Heart right ventricle (tissue), 16 donors: ENCODE measurements at regions of chr3 and their contacts with region 1.

Region 1: DNA sequence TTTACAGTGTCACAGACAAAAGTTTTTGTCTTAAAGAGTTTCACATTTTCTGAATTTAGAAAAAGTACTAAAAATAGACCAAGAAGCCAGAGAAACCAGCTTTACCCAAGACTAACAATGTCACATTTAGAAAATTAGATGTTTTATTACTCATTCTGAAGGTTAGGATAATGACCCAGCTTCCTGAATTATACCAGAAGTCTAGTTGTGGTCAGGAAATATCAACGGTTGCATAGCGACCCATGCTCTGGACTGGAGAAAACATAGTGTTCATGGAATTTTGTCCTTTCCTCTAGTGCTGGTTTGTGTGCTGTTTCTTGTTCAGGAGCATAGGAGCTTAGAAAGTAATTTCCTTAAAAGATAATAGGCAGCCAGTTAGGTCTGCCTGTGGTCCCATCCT is 59.0 kb downstream of the DPPA2 start:
- DNase-seq: no peak
- ATAC-seq: peak in 6 of 8 donors; percentile 49 to 89 (median 64)
- H3K4me3 ChIP-seq: no peak overlapping the region
- H3K27ac ChIP-seq: peak overlapping the region in 2 of 10 donors; percentile 31 to 47
- H3K4me1 ChIP-seq: no peaks in the 10 kb centered on the region
- H3K27me3 ChIP-seq: no peaks in the 10 kb centered on the region
- CTCF ChIP-seq: no peak

Region 2: GRCh38 chr3:107680698-107681097 is 1576.6 kb before region 1 on chr3:
- intact Hi-C with region 1: no loop called
- DNase-seq: no peak
- ATAC-seq: no peak
- H3K4me3 ChIP-seq: no peak overlapping the region
- H3K27ac ChIP-seq: peak overlapping the region in 1 of 10 donors; percentile 5
- H3K4me1 ChIP-seq: peaks cover 0 to 69% (median 48%) of the 10 kb centered on the region in 9 donors
- H3K27me3 ChIP-seq: no peaks in the 10 kb centered on the region
- CTCF ChIP-seq: no peak

Region 3: DNA sequence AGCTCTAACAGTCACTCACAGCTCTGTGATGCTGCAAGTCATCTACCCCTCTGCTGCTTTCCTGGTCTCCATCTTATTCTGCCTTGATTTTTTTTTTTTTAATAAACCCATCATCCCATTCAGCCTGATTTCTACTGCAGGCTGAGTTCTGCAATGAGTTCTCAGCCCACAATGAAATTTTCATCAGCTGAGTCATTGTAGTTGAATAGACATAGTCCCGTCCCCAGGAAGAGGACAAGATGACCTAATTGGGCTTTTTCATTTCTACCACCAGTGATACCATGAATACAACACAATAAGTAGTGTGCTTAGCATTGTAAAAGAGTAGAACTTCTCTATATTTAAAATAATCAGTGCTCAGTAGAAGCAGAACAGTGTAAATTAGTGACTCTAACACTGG is 61.5 kb before region 1 on chr3:
- intact Hi-C with region 1: loop called in 1 of 10 experiments (anchors 10 kb)
- DNase-seq: no peak
- ATAC-seq: peak in 1 of 8 donors; percentile 48
- H3K4me3 ChIP-seq: no peak overlapping the region
- H3K27ac ChIP-seq: peak overlapping the region in 1 of 10 donors; percentile 19
- H3K4me1 ChIP-seq: no peaks in the 10 kb centered on the region
- H3K27me3 ChIP-seq: no peaks in the 10 kb centered on the region
- CTCF ChIP-seq: no peak